ENCODE measurements at regions of chr1 and their contacts with region 1.

Region 1: GRCh38 chr1:109790735-109791494 is 27.2 kb upstream of the EPS8L3 start:
- DNase-seq: peak; percentile 94
- ATAC-seq: peak; percentile 95
- H3K4me3 Mint-ChIP-seq: peak overlapping the region; percentile 42
- H3K27ac Mint-ChIP-seq: peak overlapping the region; percentile 96
- H3K4me1 Mint-ChIP-seq: peaks cover 91% of the 10 kb centered on the region
- H3K27me3 Mint-ChIP-seq: no peaks in the 10 kb centered on the region

Region 2: DNA sequence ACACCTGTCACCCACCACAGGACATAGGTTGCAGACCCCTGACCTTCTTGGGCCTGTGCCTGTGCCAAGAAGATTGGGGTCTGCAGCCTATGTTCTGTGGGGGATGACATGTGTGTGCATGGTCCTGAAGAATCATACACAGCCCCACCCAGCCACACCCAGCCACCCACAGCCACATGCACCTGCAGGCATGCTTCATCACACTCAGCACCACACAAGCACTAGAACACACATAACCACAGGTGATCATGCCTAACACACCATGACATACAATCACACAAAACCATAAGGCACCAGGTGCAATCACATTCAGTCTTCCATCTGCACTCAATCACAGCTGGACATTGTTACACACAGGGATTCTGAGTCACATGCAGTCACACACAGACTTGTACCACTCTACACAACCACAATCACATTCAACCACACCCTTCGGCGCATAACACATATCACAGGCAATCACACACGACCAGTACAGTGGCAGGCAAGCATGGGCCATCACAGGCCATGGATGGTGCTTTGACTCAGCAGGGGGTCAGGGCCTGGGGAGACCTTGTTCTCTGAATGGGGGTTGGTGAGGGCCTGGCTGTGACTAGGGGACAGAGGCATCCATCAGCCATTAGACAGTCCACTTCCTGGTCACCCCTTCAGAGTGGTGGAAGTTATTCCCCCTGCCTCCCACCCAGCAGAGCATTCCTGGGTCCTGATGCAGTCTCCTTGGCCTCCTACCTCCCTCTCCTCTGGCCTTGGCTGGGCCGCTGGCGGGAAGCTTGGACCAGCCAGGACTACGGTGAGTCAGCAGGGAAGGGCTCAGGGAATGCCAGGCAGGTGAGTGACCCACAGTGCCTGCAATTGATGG is 17.1 kb after region 1 on chr1:
- CTCF ChIA-PET with region 1: interaction called, 96 read pairs
- POLR2A ChIA-PET with region 1: interaction called, 36 read pairs
- DNase-seq: no peak
- ATAC-seq: no peak
- H3K4me3 Mint-ChIP-seq: no peak overlapping the region
- H3K27ac Mint-ChIP-seq: no peak overlapping the region
- H3K4me1 Mint-ChIP-seq: peaks cover 51% of the 10 kb centered on the region
- H3K27me3 Mint-ChIP-seq: peaks cover under 1% of the 10 kb centered on the region

Region 3: DNA sequence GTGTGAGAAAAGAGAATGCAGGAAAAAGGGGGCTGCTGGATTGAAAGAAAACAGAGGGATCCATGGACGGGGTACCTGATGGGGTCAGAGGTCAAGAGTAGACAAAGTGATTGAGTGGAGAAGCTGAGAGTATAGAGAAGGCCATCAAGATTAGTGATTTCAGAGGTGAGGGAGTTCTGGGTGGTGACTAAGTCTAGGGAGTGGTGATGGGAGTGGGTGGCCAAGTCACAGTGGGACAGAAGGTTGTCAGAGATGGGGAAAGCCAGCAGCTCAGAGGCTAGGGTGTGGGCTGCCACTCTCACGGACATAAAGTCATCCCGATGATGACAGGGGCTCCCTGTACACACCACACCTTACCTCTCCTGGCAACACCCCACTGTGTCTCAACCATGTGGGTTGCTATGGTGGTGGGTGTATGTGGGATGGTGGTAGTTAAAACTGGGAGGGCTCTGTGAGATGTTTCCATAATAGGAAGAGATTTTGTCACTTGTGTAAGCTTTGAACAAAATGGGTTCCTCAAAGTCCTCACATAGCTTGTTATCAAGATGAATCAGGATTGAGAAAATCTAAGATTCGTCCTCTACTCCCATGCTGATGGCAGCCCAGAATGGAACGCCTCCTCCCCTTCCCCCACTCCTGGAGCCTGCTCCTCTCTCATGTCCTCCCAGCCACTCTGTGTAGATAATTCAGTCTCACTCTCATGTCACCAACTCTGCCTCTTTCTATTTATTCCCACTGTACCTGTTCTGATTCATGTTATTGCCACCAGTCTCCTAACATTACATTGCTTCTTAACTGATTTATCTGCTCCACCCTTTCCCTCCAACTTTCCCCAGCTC is 99.4 kb after region 1 on chr1:
- CTCF ChIA-PET with region 1: interaction called, 12 read pairs
- POLR2A ChIA-PET with region 1: interaction called, 3 read pairs
- DNase-seq: no peak
- ATAC-seq: peak; percentile 48
- H3K4me3 Mint-ChIP-seq: no peak overlapping the region
- H3K27ac Mint-ChIP-seq: no peak overlapping the region
- H3K4me1 Mint-ChIP-seq: peaks cover 15% of the 10 kb centered on the region
- H3K27me3 Mint-ChIP-seq: no peaks in the 10 kb centered on the region

Region 4: DNA sequence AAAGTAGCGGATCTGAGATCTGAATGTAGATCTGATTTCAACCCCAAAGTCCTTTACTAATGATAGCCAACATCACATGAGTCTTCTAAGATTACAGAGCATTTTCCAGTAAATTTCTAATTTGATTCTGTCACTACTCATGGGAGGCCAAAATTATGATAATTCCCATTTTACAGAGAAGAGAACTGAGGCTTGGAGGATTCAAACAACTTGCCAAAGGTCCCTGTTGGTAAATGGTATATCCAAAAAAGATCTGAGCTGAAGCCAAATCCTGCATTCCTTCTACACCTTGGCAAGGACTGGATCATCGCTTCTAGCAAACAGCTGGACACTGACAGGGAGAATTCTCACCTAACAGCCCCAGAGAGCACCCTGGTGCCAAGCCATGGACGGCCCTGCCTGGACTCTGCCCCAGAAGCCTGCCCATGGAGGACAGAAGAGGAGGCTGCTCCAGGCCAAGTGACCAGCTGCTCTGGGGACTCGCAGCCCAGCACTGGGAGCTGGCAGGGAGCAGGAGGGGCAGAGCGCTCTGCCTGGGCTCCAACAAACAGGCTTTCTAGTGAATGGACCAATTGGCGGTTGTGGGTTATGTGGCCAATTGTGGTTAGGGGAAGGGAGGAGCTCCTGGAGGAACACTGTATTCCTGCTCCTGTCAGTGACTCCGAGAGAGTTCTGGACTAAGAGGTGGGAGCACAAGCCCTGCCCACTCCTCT is 113.3 kb after region 1 on chr1:
- CTCF ChIA-PET with region 1: interaction called, 21 read pairs
- POLR2A ChIA-PET with region 1: interaction called, 12 read pairs
- DNase-seq: no peak
- ATAC-seq: no peak
- H3K4me3 Mint-ChIP-seq: no peak overlapping the region
- H3K27ac Mint-ChIP-seq: peak overlapping the region; percentile 32
- H3K4me1 Mint-ChIP-seq: peaks cover 61% of the 10 kb centered on the region
- H3K27me3 Mint-ChIP-seq: no peaks in the 10 kb centered on the region

Region 5: GRCh38 chr1:109917768-109918606 is 127.1 kb after region 1 on chr1:
- CTCF ChIA-PET with region 1: interaction called, 26 read pairs
- POLR2A ChIA-PET with region 1: interaction called, 4 read pairs
- DNase-seq: no peak
- ATAC-seq: no peak
- H3K4me3 Mint-ChIP-seq: no peak overlapping the region
- H3K27ac Mint-ChIP-seq: peak overlapping the region; percentile 53
- H3K4me1 Mint-ChIP-seq: peaks cover 69% of the 10 kb centered on the region
- H3K27me3 Mint-ChIP-seq: no peaks in the 10 kb centered on the region

Measured in activated CD8-positive, alpha-beta T cell treated with anti-CD3 and anti-CD28 coated beads, Interleukin-2, amount 10 ng/mL, durations not matched to agents 7 days and 5 days (primary cell).